Activated CD4-positive, alpha-beta T cell treated with anti-CD3 and anti-CD28 coated beads for 36 hours (primary cell): ENCODE measurements at regions of chr17 and their contacts with region 1.

Region 1: GRCh38 chr17:7252176-7253043 is at the start of gene ELP5:
- DNase-seq: peak; percentile 94
- ATAC-seq: peak; percentile 65
- H3K4me3 Mint-ChIP-seq: peak within 1 kb of the TSS; percentile 93
- H3K27ac Mint-ChIP-seq: peak within 1 kb of the TSS; percentile 99
- H3K4me1 Mint-ChIP-seq: peaks cover 40% of the 10 kb centered on the region
- H3K27me3 Mint-ChIP-seq: no peaks in the 10 kb centered on the region
- total RNA-seq, gene ELP5: 58.1 to 62.3 TPM

Region 2: GRCh38 chr17:6786618-6787017 is 465.8 kb before region 1 on chr17:
- CTCF ChIA-PET with region 1: no interaction called
- POLR2A ChIA-PET with region 1: no interaction called
- intact Hi-C with region 1: no loop called
- DNase-seq: no peak
- ATAC-seq: no peak
- H3K4me3 Mint-ChIP-seq: no peak overlapping the region
- H3K27ac Mint-ChIP-seq: no peak overlapping the region
- H3K4me1 Mint-ChIP-seq: peaks cover 3% of the 10 kb centered on the region
- H3K27me3 Mint-ChIP-seq: peaks cover 32% of the 10 kb centered on the region

Region 3: GRCh38 chr17:7214300-7215135 is 37.9 kb before region 1 on chr17:
- CTCF ChIA-PET with region 1: interaction called, 5 read pairs
- POLR2A ChIA-PET with region 1: interaction called, 4 read pairs
- intact Hi-C with region 1: loop called (anchors 1 to 2 kb)
- DNase-seq: peak; percentile 100
- ATAC-seq: peak; percentile 82
- H3K4me3 Mint-ChIP-seq: peak overlapping the region; percentile 81
- H3K27ac Mint-ChIP-seq: peak overlapping the region; percentile 93
- H3K4me1 Mint-ChIP-seq: peaks cover 71% of the 10 kb centered on the region
- H3K27me3 Mint-ChIP-seq: peaks cover 7% of the 10 kb centered on the region

Region 4: DNA sequence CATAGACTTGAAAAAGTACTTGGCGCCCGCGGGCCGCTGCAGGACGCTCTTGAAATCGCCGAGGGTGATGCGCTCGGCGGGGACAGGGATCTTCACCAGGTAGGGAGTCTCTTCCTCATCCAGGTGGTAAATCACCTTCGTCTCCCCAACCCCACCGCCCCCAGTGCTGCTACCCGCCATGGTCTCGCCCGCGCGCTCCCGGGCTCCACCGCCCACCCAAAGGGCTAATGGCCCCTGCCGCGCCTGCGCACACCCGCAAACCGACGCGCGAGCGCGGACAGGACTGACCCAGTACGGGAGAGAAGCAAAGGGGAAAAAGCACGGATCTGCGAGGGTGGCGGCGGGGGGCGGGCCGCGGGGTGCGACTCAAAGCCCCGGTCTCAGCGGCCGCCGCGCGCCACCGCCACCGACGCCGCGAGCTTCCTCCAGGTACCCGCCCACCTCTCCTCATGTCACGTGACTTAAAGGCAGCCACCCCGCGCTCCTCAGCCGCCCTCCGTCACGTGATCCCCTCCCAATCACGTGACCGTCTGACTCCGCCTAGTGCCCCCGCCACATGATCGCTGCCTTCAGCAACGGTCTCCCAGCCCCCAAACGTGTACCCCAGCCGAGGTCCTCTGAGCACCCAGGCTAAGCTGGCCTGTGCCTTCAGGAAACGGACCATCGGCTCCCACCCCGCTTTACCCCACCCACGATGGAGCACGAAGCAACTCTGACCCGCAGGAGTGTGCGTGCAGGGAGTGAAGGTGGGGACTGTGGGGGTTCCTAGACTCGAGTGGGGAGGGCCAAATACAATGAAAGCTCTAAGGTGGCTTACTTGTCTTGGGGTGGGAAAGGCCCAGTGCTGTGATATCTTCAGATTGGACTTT is 18.1 kb before region 1 on chr17 and contains the start of gene DVL2:
- CTCF ChIA-PET with region 1: interaction called, 4 read pairs
- POLR2A ChIA-PET with region 1: interaction called, 5 read pairs
- intact Hi-C with region 1: loop called in 1 of 2 experiments (anchors 1 kb)
- DNase-seq: peak; percentile 97
- ATAC-seq: peak; percentile 40
- H3K4me3 Mint-ChIP-seq: peak within 1 kb of the TSS; percentile 97
- H3K27ac Mint-ChIP-seq: peak within 1 kb of the TSS; percentile 91
- H3K4me1 Mint-ChIP-seq: peaks cover 49% of the 10 kb centered on the region
- H3K27me3 Mint-ChIP-seq: no peaks in the 10 kb centered on the region
- total RNA-seq, gene DVL2: 49.1 to 53.3 TPM

Region 5: GRCh38 chr17:7296189-7296902 is 43.9 kb after region 1 on chr17:
- CTCF ChIA-PET with region 1: no interaction called
- POLR2A ChIA-PET with region 1: no interaction called
- intact Hi-C with region 1: loop called in 1 of 2 experiments (anchors 1 kb)
- DNase-seq: peak; percentile 83
- ATAC-seq: peak; percentile 38
- H3K4me3 Mint-ChIP-seq: peak overlapping the region; percentile 35
- H3K27ac Mint-ChIP-seq: no peak overlapping the region
- H3K4me1 Mint-ChIP-seq: peaks cover 23% of the 10 kb centered on the region
- H3K27me3 Mint-ChIP-seq: peaks cover 19% of the 10 kb centered on the region

Region 6: GRCh38 chr17:7329374-7329996 is 77.1 kb after region 1 on chr17:
- CTCF ChIA-PET with region 1: no interaction called
- POLR2A ChIA-PET with region 1: interaction called, 3 read pairs
- intact Hi-C with region 1: loop called in 1 of 2 experiments (anchors 1 kb)
- DNase-seq: peak; percentile 98
- ATAC-seq: peak; percentile 69
- H3K4me3 Mint-ChIP-seq: peak overlapping the region; percentile 89
- H3K27ac Mint-ChIP-seq: peak overlapping the region; percentile 96
- H3K4me1 Mint-ChIP-seq: peaks cover 44% of the 10 kb centered on the region
- H3K27me3 Mint-ChIP-seq: no peaks in the 10 kb centered on the region

Region 7: GRCh38 chr17:7403977-7404736 is 151.7 kb after region 1 on chr17 and contains the start of gene TMEM256:
- CTCF ChIA-PET with region 1: no interaction called
- POLR2A ChIA-PET with region 1: no interaction called
- intact Hi-C with region 1: loop called in 1 of 2 experiments (anchors 1 kb)
- DNase-seq: peak; percentile 99
- ATAC-seq: peak; percentile 94
- H3K4me3 Mint-ChIP-seq: peak within 1 kb of the TSS; percentile 89
- H3K27ac Mint-ChIP-seq: peak within 1 kb of the TSS; percentile 92
- H3K4me1 Mint-ChIP-seq: peaks cover 16% of the 10 kb centered on the region
- H3K27me3 Mint-ChIP-seq: peaks cover 2% of the 10 kb centered on the region
- total RNA-seq, gene TMEM256: 55.8 to 58.1 TPM

Region 8: GRCh38 chr17:7614422-7615264 is 362.2 kb after region 1 on chr17 and contains the start of gene FXR2:
- CTCF ChIA-PET with region 1: no interaction called
- POLR2A ChIA-PET with region 1: no interaction called
- intact Hi-C with region 1: loop called in 1 of 2 experiments (anchors 1 kb)
- DNase-seq: peak; percentile 100
- ATAC-seq: peak; percentile 95
- H3K4me3 Mint-ChIP-seq: peak within 1 kb of the TSS; percentile 85
- H3K27ac Mint-ChIP-seq: peak within 1 kb of the TSS; percentile 93
- H3K4me1 Mint-ChIP-seq: peaks cover 32% of the 10 kb centered on the region
- H3K27me3 Mint-ChIP-seq: no peaks in the 10 kb centered on the region
- total RNA-seq, gene FXR2: 35.6 to 50.2 TPM